K562 (cell line): ENCODE measurements at regions of chr2 and their contacts with region 1.

Region 1: GRCh38 chr2:186913870-186914269 is 64.9 kb upstream of the ZSWIM2 start:
- DNase-seq: no peak
- ATAC-seq: peak; percentile 68
- H3K4me3 ChIP-seq: no peak overlapping the region
- H3K27ac ChIP-seq: no peak overlapping the region
- H3K4me1 ChIP-seq: peaks cover 3 to 12% of the 10 kb centered on the region in 2 experiments; a peak in 2 of 5 replicates
- H3K27me3 ChIP-seq: no peaks in the 10 kb centered on the region
- CTCF ChIP-seq: no peak
- EP300 ChIP-seq: no peak
- POLR2A ChIP-seq: no peak
- RAD21 ChIP-seq: no peak

Region 2: GRCh38 chr2:187003038-187003554 is 89.2 kb after region 1 on chr2:
- CTCF ChIA-PET with region 1: no interaction called
- POLR2A ChIA-PET with region 1: no interaction called
- in situ Hi-C with region 1: no loop called
- intact Hi-C with region 1: loop called (anchors 5 kb)
- DNase-seq: peak; percentile 49 to 82 (median 60)
- ATAC-seq: peak; percentile 93
- H3K4me3 ChIP-seq: peak overlapping the region; percentile 60
- H3K27ac ChIP-seq: peak overlapping the region; percentile 79
- H3K4me1 ChIP-seq: peaks cover 2 to 6% of the 10 kb centered on the region in 2 experiments; a peak in 2 of 5 replicates
- H3K27me3 ChIP-seq: no peaks in the 10 kb centered on the region
- CTCF ChIP-seq: no peak
- EP300 ChIP-seq: no peak
- POLR2A ChIP-seq: peak; percentile 88
- RAD21 ChIP-seq: no peak